ENCODE measurements at regions of chr4 and their contacts with region 1.

Region 1: GRCh38 chr4:163544407-163545038 is 50.0 kb downstream of the TMA16 start:
- DNase-seq: peak; percentile 66
- H3K4me3 ChIP-seq: no peak overlapping the region
- H3K27ac ChIP-seq: no peak overlapping the region
- H3K4me1 ChIP-seq: no peaks in the 10 kb centered on the region
- H3K27me3 ChIP-seq: no peaks in the 10 kb centered on the region
- CTCF ChIP-seq: peak; percentile 93 to 95
- POLR2A ChIP-seq: no peak

Region 2: GRCh38 chr4:163107754-163108153 is 436.8 kb before region 1 on chr4:
- CTCF ChIA-PET with region 1: interaction called, 5 read pairs
- POLR2A ChIA-PET with region 1: no interaction called
- dilution Hi-C with region 1: no loop called
- intact Hi-C with region 1: loop called (anchors 2 kb)
- DNase-seq: peak; percentile 63
- H3K4me3 ChIP-seq: no peak overlapping the region
- H3K27ac ChIP-seq: no peak overlapping the region
- H3K4me1 ChIP-seq: no peaks in the 10 kb centered on the region
- H3K27me3 ChIP-seq: no peaks in the 10 kb centered on the region
- CTCF ChIP-seq: peak in 1 of 2 donors; percentile 1
- POLR2A ChIP-seq: no peak

Region 3: DNA sequence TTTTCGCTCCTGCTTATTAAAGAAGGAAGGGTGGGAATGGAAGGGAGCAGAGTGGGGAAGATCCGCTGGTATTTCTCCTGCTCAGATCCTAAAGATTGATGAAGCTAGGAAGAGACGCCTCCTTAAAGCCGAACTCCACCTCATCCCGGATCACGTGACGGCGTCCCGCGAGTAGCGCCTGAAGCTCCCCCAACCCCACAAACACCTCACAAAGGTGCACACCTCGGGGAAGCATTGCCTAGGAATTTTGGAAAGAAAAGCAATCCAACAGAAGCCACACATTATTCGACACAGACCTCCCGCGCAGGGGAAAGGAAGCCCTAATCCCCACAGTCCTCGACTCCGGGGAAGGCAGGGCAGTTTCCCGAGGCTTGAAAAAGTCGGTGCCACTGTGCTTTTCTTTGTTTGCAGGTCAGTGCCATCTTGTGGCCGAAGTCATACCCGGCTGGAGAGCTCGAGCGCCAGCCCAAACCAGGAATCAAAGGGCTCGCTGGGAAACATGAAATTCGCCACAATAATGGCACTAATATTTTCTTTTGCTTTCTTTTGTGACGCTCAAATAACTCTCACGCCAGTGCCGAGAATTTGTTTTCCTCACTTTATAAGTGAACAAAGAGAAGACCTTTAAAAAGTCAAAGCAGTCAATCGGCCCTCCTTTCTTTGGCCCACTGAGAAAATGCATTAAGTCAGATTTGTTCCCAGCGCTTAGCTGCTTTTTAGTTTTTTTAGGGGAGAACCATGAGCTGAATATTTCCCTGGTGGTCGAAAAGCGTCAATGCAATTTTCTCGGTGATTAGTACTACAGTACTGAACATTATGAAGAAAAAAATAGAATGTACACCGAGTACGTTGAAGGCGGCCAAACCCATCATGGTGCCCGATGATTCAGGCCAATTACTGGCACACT is 211.8 kb before region 1 on chr4 and contains the start of gene NPY1R:
- CTCF ChIA-PET with region 1: interaction called, 16 read pairs
- POLR2A ChIA-PET with region 1: no interaction called
- dilution Hi-C with region 1: no loop called
- intact Hi-C with region 1: loop called (anchors 2 kb)
- DNase-seq: peak; percentile 80
- H3K4me3 ChIP-seq: peak within 1 kb of the TSS in 2 of 3 experiments; percentile 39 to 42
- H3K27ac ChIP-seq: no peak within 1 kb of the TSS
- H3K4me1 ChIP-seq: peaks cover 6% of the 10 kb centered on the region
- H3K27me3 ChIP-seq: peaks cover 21 to 29% of the 10 kb centered on the region in 2 experiments
- CTCF ChIP-seq: peak; percentile 68 to 81
- POLR2A ChIP-seq: no peak
- total RNA-seq, gene NPY1R: not detected in 2 replicates

Region 4: GRCh38 chr4:163344147-163345125 is 200.1 kb before region 1 on chr4:
- CTCF ChIA-PET with region 1: no interaction called
- POLR2A ChIA-PET with region 1: no interaction called
- dilution Hi-C with region 1: no loop called
- intact Hi-C with region 1: no loop called
- DNase-seq: no peak
- H3K4me3 ChIP-seq: no peak overlapping the region
- H3K27ac ChIP-seq: no peak overlapping the region
- H3K4me1 ChIP-seq: no peaks in the 10 kb centered on the region
- H3K27me3 ChIP-seq: peaks cover 21 to 41% of the 10 kb centered on the region in 2 experiments
- CTCF ChIP-seq: no peak
- POLR2A ChIP-seq: no peak

Region 5: GRCh38 chr4:163494360-163495162 is 50.0 kb before region 1 on chr4 and contains the start of gene TMA16:
- CTCF ChIA-PET with region 1: interaction called, 37 read pairs
- POLR2A ChIA-PET with region 1: interaction called, 7 read pairs
- dilution Hi-C with region 1: no loop called
- intact Hi-C with region 1: loop called (anchors 2 kb)
- DNase-seq: peak; percentile 93
- H3K4me3 ChIP-seq: peak within 1 kb of the TSS; percentile 83 to 93 (median 90)
- H3K27ac ChIP-seq: peak within 1 kb of the TSS; percentile 87
- H3K4me1 ChIP-seq: peaks cover 23% of the 10 kb centered on the region
- H3K27me3 ChIP-seq: no peaks in the 10 kb centered on the region
- CTCF ChIP-seq: no peak
- POLR2A ChIP-seq: peak; percentile 83
- total RNA-seq, gene TMA16: 41.1 and 42.7 TPM in 2 replicates

Region 6: DNA sequence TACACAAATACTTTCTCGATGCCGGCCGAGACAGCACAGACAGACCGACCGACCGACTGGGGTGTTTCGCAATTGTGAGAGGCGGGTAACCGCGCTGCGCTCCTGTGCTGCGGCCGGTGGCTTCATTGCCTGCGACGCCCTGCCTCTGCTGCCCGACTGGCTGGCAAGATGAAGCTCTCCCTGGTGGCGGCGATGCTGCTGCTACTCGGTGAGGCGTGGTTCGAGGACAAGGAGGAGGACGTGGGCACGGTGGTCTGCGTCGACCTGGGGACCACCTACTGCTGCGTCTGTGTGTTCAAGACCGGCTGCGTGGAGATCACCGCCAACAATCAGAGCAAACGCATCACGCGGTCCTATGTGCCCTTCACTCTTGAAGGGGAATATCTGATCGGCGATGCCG is 643.7 kb after region 1 on chr4:
- CTCF ChIA-PET with region 1: no interaction called
- POLR2A ChIA-PET with region 1: no interaction called
- dilution Hi-C with region 1: no loop called
- intact Hi-C with region 1: no loop called
- DNase-seq: no peak
- H3K4me3 ChIP-seq: no peak overlapping the region
- H3K27ac ChIP-seq: no peak overlapping the region
- H3K4me1 ChIP-seq: no peaks in the 10 kb centered on the region
- H3K27me3 ChIP-seq: no peaks in the 10 kb centered on the region
- CTCF ChIP-seq: no peak
- POLR2A ChIP-seq: no peak

Region 7: DNA sequence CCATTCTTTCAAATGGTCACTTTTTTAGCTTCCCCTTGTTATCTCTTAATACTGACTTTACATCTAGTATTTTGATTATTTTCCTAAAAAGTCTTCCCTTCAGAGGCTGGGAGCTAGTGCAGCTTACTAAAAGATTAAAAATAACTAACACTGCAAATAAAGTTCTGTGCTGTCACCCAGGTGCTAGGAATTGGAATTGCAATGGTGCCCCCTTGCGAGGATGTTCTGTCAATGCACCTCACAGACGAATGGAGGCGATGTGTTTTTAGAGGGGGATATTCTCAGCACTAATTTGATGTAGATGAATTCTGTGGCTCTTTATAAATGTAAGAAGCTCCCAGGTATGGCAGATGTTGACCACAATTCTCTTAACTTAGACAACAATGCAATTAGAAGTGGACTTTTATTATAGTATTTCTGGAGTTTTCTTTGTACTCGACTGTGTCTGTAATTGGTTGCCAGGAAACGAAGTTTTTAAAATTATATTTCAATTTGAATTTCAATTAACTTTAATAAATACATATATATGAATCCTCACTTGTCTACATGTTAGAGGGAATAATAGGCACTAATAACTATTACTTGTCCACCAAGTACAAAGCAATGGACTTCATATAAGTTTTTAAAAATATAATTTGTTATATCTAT is 1187.4 kb after region 1 on chr4:
- CTCF ChIA-PET with region 1: interaction called, 211 read pairs
- POLR2A ChIA-PET with region 1: no interaction called
- dilution Hi-C with region 1: no loop called
- intact Hi-C with region 1: no loop called
- DNase-seq: peak; percentile 46
- H3K4me3 ChIP-seq: no peak overlapping the region
- H3K27ac ChIP-seq: no peak overlapping the region
- H3K4me1 ChIP-seq: no peaks in the 10 kb centered on the region
- H3K27me3 ChIP-seq: no peaks in the 10 kb centered on the region
- CTCF ChIP-seq: peak; percentile 73 to 74
- POLR2A ChIP-seq: no peak